ENCODE measurements at regions of chr5 and their contacts with region 1.

Region 1: GRCh38 chr5:126471875-126472537 is 48.8 kb downstream of the GRAMD2B start:
- DNase-seq: peak in 1 of 2 experiments; percentile 42
- H3K4me3 ChIP-seq: 0 out of 2 replicates have a peak overlapping the region, but pooled peaks have one; percentile 1
- H3K4me3 Mint-ChIP-seq: peak overlapping the region; percentile 9
- H3K27ac Mint-ChIP-seq: peak overlapping the region; percentile 43
- H3K4me1 ChIP-seq: peaks cover 45% of the 10 kb centered on the region
- H3K4me1 Mint-ChIP-seq: peaks cover 10% of the 10 kb centered on the region
- H3K27me3 ChIP-seq: no peaks in the 10 kb centered on the region
- H3K27me3 Mint-ChIP-seq: no peaks in the 10 kb centered on the region
- CTCF ChIP-seq: no peak

Region 2: DNA sequence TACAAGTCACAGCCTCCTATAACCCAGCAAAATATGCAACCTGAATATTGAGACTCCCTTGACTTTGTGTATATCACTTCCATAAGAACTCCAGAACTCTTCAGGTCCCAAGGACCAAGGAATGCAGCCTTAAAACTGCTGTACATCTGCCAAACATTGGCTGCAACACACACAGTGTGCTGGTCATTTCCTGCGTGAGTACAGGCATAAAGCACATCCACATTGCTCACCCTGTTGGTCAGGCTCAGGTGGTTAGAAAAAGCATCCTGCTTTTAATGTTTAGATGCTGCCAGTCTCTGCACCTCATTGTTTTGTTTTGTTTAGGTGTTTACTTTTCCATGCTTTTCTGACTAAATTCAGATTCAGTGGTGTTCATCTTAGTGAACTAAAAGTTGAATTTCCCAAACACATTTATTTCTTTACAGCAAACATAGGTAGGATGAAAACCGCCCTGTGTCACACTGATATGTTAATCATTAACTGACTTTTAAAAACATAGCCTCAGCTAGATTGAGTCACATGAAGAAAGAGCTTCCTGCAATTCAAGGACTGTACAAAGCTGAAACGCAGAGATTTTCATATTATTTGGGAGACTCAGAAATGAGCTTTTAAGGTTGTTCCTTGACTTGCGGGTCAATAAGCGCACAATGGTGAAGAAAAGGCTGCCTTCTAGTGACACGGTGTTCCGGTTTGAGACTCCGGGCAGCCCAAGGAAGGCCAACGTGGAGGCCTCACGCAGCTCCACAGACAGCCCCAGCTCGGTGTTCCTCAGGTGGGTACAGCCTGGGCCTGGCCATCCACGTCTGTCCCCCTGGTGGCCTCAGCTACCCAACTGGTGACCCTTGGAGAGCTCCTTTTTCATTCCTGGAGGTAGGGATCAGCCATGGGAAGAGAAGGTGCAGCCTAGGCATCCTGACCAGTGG is 100.9 kb before region 1 on chr5:
- CTCF ChIA-PET with region 1: no interaction called
- POLR2A ChIA-PET with region 1: no interaction called
- intact Hi-C with region 1: loop called (anchors 5 kb)
- DNase-seq: peak; percentile 20 to 55
- H3K4me3 ChIP-seq: peak overlapping the region; percentile 26
- H3K4me3 Mint-ChIP-seq: peak overlapping the region; percentile 65
- H3K27ac Mint-ChIP-seq: peak overlapping the region; percentile 50
- H3K4me1 ChIP-seq: peaks cover 44% of the 10 kb centered on the region
- H3K4me1 Mint-ChIP-seq: peaks cover 28% of the 10 kb centered on the region
- H3K27me3 ChIP-seq: no peaks in the 10 kb centered on the region
- H3K27me3 Mint-ChIP-seq: no peaks in the 10 kb centered on the region
- CTCF ChIP-seq: peak in 1 of 2 experiments; percentile 13